ENCODE measurements at regions of chr1 and their contacts with region 1.

Region 1: DNA sequence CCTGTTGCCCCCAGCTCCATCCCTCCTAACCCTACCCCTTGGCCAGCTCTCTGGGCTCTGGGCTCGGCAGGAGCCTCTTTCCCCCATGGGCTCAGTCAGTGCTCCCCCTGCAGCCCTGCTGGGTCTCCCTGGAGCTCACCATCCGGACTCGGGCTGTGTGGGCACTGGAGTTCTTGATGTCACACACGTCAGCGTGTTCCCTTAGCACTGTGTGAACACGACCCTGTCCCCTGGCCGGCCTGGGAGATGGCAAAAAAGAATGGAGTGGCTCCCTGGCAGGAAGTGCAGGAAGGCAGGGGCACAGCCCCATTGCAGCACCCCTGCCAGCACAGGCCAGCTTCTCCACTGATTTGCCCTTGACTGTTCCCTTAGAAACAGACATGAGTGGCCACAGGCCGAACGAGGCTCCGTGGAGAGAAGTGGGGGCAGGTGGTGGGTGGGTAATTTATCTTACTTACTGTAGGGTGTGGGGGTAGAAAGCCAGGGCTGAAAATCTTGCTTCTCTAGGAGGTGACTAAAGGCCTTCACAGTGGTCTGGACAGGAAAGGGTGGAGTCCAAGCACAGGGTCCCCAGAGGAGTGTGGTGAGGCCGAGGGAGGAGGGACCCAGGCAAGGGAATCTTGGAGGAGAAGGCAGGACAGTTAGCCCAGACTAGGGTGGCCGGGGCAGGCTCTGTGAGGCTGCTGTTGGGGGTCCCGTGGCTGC is 381.7 kb upstream of the VAMP3 start:
- DNase-seq: no peak
- H3K4me3 ChIP-seq: no peak overlapping the region
- H3K27ac ChIP-seq: no peak overlapping the region
- H3K4me1 ChIP-seq: no peaks in the 10 kb centered on the region
- H3K27me3 ChIP-seq: peaks cover 61% of the 10 kb centered on the region
- CTCF ChIP-seq: no peak

Region 2: GRCh38 chr1:6509919-6510291 is 879.4 kb before region 1 on chr1:
- CTCF ChIA-PET with region 1: no interaction called
- POLR2A ChIA-PET with region 1: no interaction called
- intact Hi-C with region 1: no loop called
- DNase-seq: no peak
- H3K4me3 ChIP-seq: no peak overlapping the region
- H3K27ac ChIP-seq: no peak overlapping the region
- H3K4me1 ChIP-seq: peaks cover 5% of the 10 kb centered on the region; the same call in 1 of the 2 replicates
- H3K27me3 ChIP-seq: no peaks in the 10 kb centered on the region
- CTCF ChIP-seq: no peak

Region 3: GRCh38 chr1:8374812-8375211 is 985.5 kb after region 1 on chr1:
- CTCF ChIA-PET with region 1: no interaction called
- POLR2A ChIA-PET with region 1: interaction called, 28 read pairs
- intact Hi-C with region 1: no loop called
- DNase-seq: no peak
- H3K4me3 ChIP-seq: no peak overlapping the region
- H3K27ac ChIP-seq: no peak overlapping the region
- H3K4me1 ChIP-seq: no peaks in the 10 kb centered on the region
- H3K27me3 ChIP-seq: no peaks in the 10 kb centered on the region
- CTCF ChIP-seq: peak; percentile 55

Measured in PC-9 (cell line).